ENCODE measurements at regions of chr1 and their contacts with region 1.

Region 1: DNA sequence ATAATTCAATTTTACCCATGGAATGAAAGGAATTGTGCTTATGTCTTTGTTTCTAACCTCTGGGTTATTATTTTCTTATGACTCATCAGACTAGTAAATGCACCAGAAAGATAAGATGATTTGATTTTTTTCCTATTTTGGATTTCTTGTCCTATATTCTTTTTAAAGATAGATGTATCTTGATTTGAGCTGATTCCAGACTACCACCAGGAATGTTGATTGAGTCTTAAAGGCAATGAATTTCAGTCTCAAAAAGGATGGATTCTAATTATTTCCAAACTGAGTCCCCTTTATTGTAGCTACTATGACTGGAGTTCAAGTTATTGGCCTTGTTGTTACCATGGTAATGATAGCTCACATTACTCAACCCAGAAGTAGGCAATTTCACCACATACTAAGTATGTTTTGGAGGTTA is 95.8 kb upstream of the RGS4 start:
- DNase-seq: no peak
- ATAC-seq: no peak

Region 2: DNA sequence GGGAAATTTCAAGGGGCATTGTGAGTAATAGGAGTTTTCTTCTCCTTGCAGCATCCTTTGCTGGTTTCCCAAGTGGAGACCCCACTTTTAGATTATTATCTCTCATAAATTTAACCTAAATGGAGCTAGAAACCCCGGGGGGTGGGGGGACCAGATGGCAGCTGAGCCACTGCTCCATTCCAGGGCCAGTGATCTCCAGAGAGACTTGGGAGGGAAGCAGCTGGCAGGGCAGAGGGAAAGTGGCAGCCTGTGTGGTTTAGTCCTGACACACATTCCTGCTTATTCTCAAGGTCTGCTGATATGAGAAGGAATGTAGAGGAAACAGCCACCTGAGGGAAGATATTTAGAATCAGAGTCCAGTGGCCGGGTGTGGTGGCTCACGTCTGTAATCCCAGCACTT is 1698.5 kb before region 1 on chr1:
- intact Hi-C with region 1: loop called (anchors 10 kb)
- DNase-seq: no peak
- ATAC-seq: no peak

Measured in sciatic nerve (tissue), 2 donors.